ENCODE measurements at regions of chr7 and their contacts with region 1.

Region 1: GRCh38 chr7:47474937-47475878 is 106.7 kb downstream of the TNS3 start:
- DNase-seq: peak; percentile 99 to 100
- H3K4me3 ChIP-seq: peak overlapping the region; percentile 16; the same call in 1 of the 2 replicates
- H3K27ac ChIP-seq: peak overlapping the region; percentile 87
- H3K4me1 ChIP-seq: peaks cover 58% of the 10 kb centered on the region
- H3K27me3 ChIP-seq: no peaks in the 10 kb centered on the region
- CTCF ChIP-seq: no peak; the same call in 1 of the 2 replicates

Region 2: GRCh38 chr7:46682836-46683624 is 792.2 kb before region 1 on chr7:
- CTCF ChIA-PET with region 1: no interaction called
- POLR2A ChIA-PET with region 1: no interaction called
- intact Hi-C with region 1: no loop called
- DNase-seq: peak in 1 of 2 experiments; percentile 36
- H3K4me3 ChIP-seq: no peak overlapping the region
- H3K27ac ChIP-seq: no peak overlapping the region
- H3K4me1 ChIP-seq: 0 out of 2 replicates have a peak, but pooled peaks cover 6% of the 10 kb centered on the region
- H3K27me3 ChIP-seq: no peaks in the 10 kb centered on the region
- CTCF ChIP-seq: no peak

Region 3: GRCh38 chr7:47418601-47419381 is 56.4 kb before region 1 on chr7:
- CTCF ChIA-PET with region 1: no interaction called
- POLR2A ChIA-PET with region 1: no interaction called
- intact Hi-C with region 1: no loop called
- DNase-seq: no peak
- H3K4me3 ChIP-seq: no peak overlapping the region
- H3K27ac ChIP-seq: no peak overlapping the region
- H3K4me1 ChIP-seq: no peaks in the 10 kb centered on the region
- H3K27me3 ChIP-seq: no peaks in the 10 kb centered on the region
- CTCF ChIP-seq: no peak

Region 4: GRCh38 chr7:47444379-47445057 is 30.7 kb before region 1 on chr7:
- CTCF ChIA-PET with region 1: interaction called, 4 read pairs
- POLR2A ChIA-PET with region 1: interaction called, 6 read pairs
- intact Hi-C with region 1: loop called (anchors 5 kb)
- DNase-seq: no peak
- H3K4me3 ChIP-seq: no peak overlapping the region
- H3K27ac ChIP-seq: no peak overlapping the region
- H3K4me1 ChIP-seq: peaks cover 91% of the 10 kb centered on the region
- H3K27me3 ChIP-seq: no peaks in the 10 kb centered on the region
- CTCF ChIP-seq: peak; percentile 60

Region 5: GRCh38 chr7:47453093-47454049 is 21.8 kb before region 1 on chr7:
- CTCF ChIA-PET with region 1: no interaction called
- POLR2A ChIA-PET with region 1: no interaction called
- intact Hi-C with region 1: loop called (anchors 1 kb)
- DNase-seq: peak; percentile 83 to 99
- H3K4me3 ChIP-seq: peak overlapping the region; percentile 58
- H3K27ac ChIP-seq: peak overlapping the region; percentile 83
- H3K4me1 ChIP-seq: peaks cover 80% of the 10 kb centered on the region
- H3K27me3 ChIP-seq: no peaks in the 10 kb centered on the region
- CTCF ChIP-seq: no peak; the same call in 1 of the 2 replicates

Region 6: GRCh38 chr7:47485640-47486435 is 10.6 kb after region 1 on chr7:
- CTCF ChIA-PET with region 1: no interaction called
- POLR2A ChIA-PET with region 1: no interaction called
- intact Hi-C with region 1: no loop called
- DNase-seq: peak; percentile 72 to 76
- H3K4me3 ChIP-seq: no peak overlapping the region
- H3K27ac ChIP-seq: peak overlapping the region; percentile 17
- H3K4me1 ChIP-seq: peaks cover 54% of the 10 kb centered on the region
- H3K27me3 ChIP-seq: no peaks in the 10 kb centered on the region
- CTCF ChIP-seq: no peak

Region 7: DNA sequence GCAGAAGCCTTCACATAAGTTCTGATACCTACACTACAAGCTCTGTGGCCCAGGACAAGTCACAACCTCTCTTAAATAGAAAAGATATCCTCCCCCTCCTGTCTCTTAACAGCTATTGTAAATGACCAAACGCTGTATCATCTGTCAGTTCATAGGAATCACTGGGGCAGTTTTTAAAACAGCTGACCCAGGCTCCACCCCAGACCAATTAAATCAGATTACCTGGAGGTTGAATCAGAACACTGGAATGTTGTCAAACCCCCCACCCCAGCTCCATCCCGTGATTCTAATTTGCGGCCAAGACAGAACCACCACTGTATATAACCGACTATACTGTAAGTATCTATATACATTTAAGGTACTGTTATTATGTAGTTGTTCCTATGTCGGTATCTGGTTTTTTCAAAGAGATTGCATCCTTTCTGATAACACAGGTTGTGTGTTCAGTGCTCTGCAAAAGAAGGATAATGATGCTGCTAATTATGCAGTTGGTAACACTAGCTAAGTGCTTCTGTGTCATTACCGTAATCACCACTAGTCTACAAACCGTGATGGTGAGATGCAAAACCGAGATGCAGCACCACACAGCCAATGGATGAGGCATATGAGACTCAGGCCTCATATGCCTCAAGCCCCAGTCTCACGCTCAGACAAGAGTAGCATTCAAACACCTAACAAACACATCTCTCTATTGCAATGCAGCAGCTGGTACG is 59.3 kb after region 1 on chr7:
- CTCF ChIA-PET with region 1: interaction called, 3 read pairs
- POLR2A ChIA-PET with region 1: interaction called, 7 read pairs
- intact Hi-C with region 1: loop called (anchors 2 kb)
- DNase-seq: peak; percentile 76 to 89
- H3K4me3 ChIP-seq: no peak overlapping the region
- H3K27ac ChIP-seq: peak overlapping the region; percentile 52
- H3K4me1 ChIP-seq: peaks cover 84% of the 10 kb centered on the region
- H3K27me3 ChIP-seq: no peaks in the 10 kb centered on the region
- CTCF ChIP-seq: peak; percentile 62

Region 8: GRCh38 chr7:47581806-47582763 is 106.9 kb after region 1 on chr7 and contains the start of gene TNS3:
- CTCF ChIA-PET with region 1: no interaction called
- POLR2A ChIA-PET with region 1: interaction called, 13 read pairs
- intact Hi-C with region 1: no loop called
- DNase-seq: peak; percentile 64 to 74
- H3K4me3 ChIP-seq: peak within 1 kb of the TSS; percentile 65
- H3K27ac ChIP-seq: peak within 1 kb of the TSS; percentile 87
- H3K4me1 ChIP-seq: peaks cover 80% of the 10 kb centered on the region
- H3K27me3 ChIP-seq: no peaks in the 10 kb centered on the region
- CTCF ChIP-seq: no peak; the same call in 1 of the 2 replicates
- total RNA-seq, gene TNS3: 111 and 143 TPM in 2 replicates

Region 9: GRCh38 chr7:47605816-47606575 is 130.8 kb after region 1 on chr7:
- CTCF ChIA-PET with region 1: no interaction called
- POLR2A ChIA-PET with region 1: no interaction called
- intact Hi-C with region 1: loop called (anchors 1 kb)
- DNase-seq: no peak
- H3K4me3 ChIP-seq: no peak overlapping the region
- H3K27ac ChIP-seq: peak overlapping the region; percentile 98
- H3K4me1 ChIP-seq: peaks cover 77% of the 10 kb centered on the region
- H3K27me3 ChIP-seq: no peaks in the 10 kb centered on the region
- CTCF ChIP-seq: no peak

Region 10: GRCh38 chr7:48088559-48089045 is 613.4 kb after region 1 on chr7:
- CTCF ChIA-PET with region 1: no interaction called
- POLR2A ChIA-PET with region 1: no interaction called
- intact Hi-C with region 1: loop called (anchors 10 kb)
- DNase-seq: peak; percentile 93
- H3K4me3 ChIP-seq: peak overlapping the region; percentile 73
- H3K27ac ChIP-seq: peak overlapping the region; percentile 98
- H3K4me1 ChIP-seq: peaks cover 76% of the 10 kb centered on the region
- H3K27me3 ChIP-seq: no peaks in the 10 kb centered on the region
- CTCF ChIP-seq: no peak

Measured in PC-9 (cell line).